Left cardiac atrium (tissue), 4 donors: ENCODE measurements at regions of chr12 and their contacts with region 1.

Region 1: GRCh38 chr12:27014085-27014858 is at the start of gene TM7SF3:
- DNase-seq: peak; percentile 93
- ATAC-seq: peak; percentile 95 to 96
- total RNA-seq, gene TM7SF3: 20.4 to 31.2 TPM

Region 2: DNA sequence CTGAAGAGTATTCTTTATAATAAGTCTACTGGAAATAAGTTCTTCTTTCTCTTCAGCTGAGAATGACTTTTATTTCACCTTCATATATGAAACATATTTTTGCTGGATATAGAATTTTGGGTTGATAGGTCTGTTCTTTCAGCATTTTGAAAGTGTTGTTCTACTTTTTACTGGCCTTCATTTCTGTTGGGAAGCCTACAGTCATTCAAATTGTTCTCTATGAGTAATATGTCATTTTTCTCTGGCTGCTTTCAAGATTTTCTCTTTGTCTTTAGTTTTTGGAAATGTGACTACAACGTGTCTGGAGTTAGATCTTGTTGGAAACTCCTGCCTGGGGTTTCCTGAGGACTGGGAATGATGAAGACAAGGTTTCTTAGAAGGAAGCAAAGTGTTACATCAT is 66.0 kb before region 1 on chr12:
- intact Hi-C with region 1: loop called in 1 of 2 experiments (anchors 5 kb)
- DNase-seq: no peak
- ATAC-seq: no peak